Colonic mucosa (tissue), 4 donors: ENCODE measurements at regions of chr5 and their contacts with region 1.

Region 1: GRCh38 chr5:95664204-95664786 is 17.7 kb downstream of the RFESD start:
- DNase-seq: peak; percentile 38
- H3K4me3 ChIP-seq: no peak overlapping the region
- H3K27ac ChIP-seq: no peak overlapping the region
- H3K4me1 ChIP-seq: no peaks in the 10 kb centered on the region
- H3K27me3 ChIP-seq: no peaks in the 10 kb centered on the region
- CTCF ChIP-seq: peak; percentile 81

Region 2: DNA sequence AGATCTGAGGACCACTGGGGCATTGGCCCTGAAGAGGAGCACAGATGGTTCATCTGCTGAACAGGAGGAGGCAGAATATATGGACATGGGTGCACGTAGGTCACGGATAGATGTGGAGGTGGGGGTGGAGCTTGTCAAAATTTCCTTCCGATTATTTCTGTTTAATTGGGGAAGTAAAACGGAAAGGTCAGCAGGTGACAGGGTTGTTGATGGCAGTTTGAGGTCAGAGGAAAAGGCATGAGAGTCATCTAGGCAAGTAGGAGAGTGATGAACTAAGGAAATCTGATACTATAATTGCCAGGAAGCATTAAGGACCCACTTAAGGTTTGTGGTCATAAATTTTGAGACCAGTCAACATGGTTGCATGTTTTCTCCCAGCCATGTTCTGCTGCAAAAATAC is 281.5 kb before region 1 on chr5:
- intact Hi-C with region 1: no loop called
- DNase-seq: no peak
- H3K4me3 ChIP-seq: no peak overlapping the region
- H3K27ac ChIP-seq: no peak overlapping the region
- H3K4me1 ChIP-seq: no peaks in the 10 kb centered on the region
- H3K27me3 ChIP-seq: no peaks in the 10 kb centered on the region
- CTCF ChIP-seq: no peak

Region 3: GRCh38 chr5:95730730-95731570 is 66.7 kb after region 1 on chr5 and contains the start of gene RHOBTB3:
- intact Hi-C with region 1: loop called (anchors 10 kb)
- DNase-seq: peak; percentile 93
- H3K4me3 ChIP-seq: peak within 1 kb of the TSS; percentile 61
- H3K27ac ChIP-seq: peak within 1 kb of the TSS; percentile 84
- H3K4me1 ChIP-seq: peaks cover 6% of the 10 kb centered on the region
- H3K27me3 ChIP-seq: no peaks in the 10 kb centered on the region
- CTCF ChIP-seq: no peak
- total RNA-seq, gene RHOBTB3: 50.0 to 59.0 TPM

Region 4: GRCh38 chr5:95835682-95836385 is 171.5 kb after region 1 on chr5:
- intact Hi-C with region 1: no loop called
- DNase-seq: no peak
- H3K4me3 ChIP-seq: peak overlapping the region; percentile 42
- H3K27ac ChIP-seq: no peak overlapping the region
- H3K4me1 ChIP-seq: peaks cover 9% of the 10 kb centered on the region
- H3K27me3 ChIP-seq: no peaks in the 10 kb centered on the region
- CTCF ChIP-seq: no peak

Region 5: GRCh38 chr5:95846554-95847260 is 182.4 kb after region 1 on chr5:
- intact Hi-C with region 1: loop called (anchors 5 kb)
- DNase-seq: peak; percentile 80
- H3K4me3 ChIP-seq: no peak overlapping the region
- H3K27ac ChIP-seq: no peak overlapping the region
- H3K4me1 ChIP-seq: peaks cover 7% of the 10 kb centered on the region
- H3K27me3 ChIP-seq: no peaks in the 10 kb centered on the region
- CTCF ChIP-seq: peak; percentile 92

Region 6: DNA sequence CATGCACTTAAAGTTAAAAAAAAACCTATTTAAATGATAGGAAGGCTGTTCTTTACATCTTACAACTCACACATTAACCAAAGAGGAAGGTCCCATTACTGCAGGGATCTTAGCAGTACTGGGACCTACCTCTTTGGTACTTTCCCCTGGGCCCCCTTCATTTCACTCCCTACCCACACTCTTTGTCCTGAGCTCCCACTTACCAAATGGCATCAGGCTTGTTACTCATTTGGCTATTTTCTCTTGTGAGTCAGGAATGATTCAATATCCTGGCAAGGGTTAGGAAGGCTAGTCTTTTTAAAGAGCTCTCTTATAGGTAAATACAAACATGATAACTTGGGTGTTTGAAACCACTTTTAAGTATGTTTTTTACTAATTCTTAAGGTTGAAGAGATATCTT is 414.8 kb after region 1 on chr5:
- intact Hi-C with region 1: no loop called
- DNase-seq: no peak
- H3K4me3 ChIP-seq: no peak overlapping the region
- H3K27ac ChIP-seq: no peak overlapping the region
- H3K4me1 ChIP-seq: no peaks in the 10 kb centered on the region
- H3K27me3 ChIP-seq: no peaks in the 10 kb centered on the region
- CTCF ChIP-seq: no peak